ENCODE measurements at regions of chr20 and their contacts with region 1.

Region 1: GRCh38 chr20:61638802-61639599 is 386.9 kb downstream of the CDH4 start:
- DNase-seq: no peak
- ATAC-seq: no peak
- H3K4me3 ChIP-seq: no peak overlapping the region
- H3K27ac ChIP-seq: no peak overlapping the region
- H3K4me1 ChIP-seq: no peaks in the 10 kb centered on the region
- H3K27me3 ChIP-seq: peaks cover 0 to 68% (median 42%) of the 10 kb centered on the region in 7 donors
- CTCF ChIP-seq: no peak

Region 2: GRCh38 chr20:61699495-61700374 is 60.7 kb after region 1 on chr20:
- intact Hi-C with region 1: loop called in 1 of 10 experiments (anchors 10 kb)
- DNase-seq: no peak
- ATAC-seq: peak in 5 of 8 donors; percentile 23 to 78 (median 63)
- H3K4me3 ChIP-seq: no peak overlapping the region
- H3K27ac ChIP-seq: no peak overlapping the region
- H3K4me1 ChIP-seq: no peaks in the 10 kb centered on the region
- H3K27me3 ChIP-seq: peaks cover 0 to 15% (median 4%) of the 10 kb centered on the region in 7 donors
- CTCF ChIP-seq: no peak

Region 3: GRCh38 chr20:61797200-61797599 is 158.2 kb after region 1 on chr20:
- intact Hi-C with region 1: no loop called
- DNase-seq: no peak
- ATAC-seq: no peak
- H3K4me3 ChIP-seq: no peak overlapping the region
- H3K27ac ChIP-seq: no peak overlapping the region
- H3K4me1 ChIP-seq: no peaks in the 10 kb centered on the region
- H3K27me3 ChIP-seq: peaks cover 0 to 59% (median 46%) of the 10 kb centered on the region in 7 donors
- CTCF ChIP-seq: no peak